ENCODE measurements at regions of chr10 and their contacts with region 1.

Region 1: GRCh38 chr10:28179006-28179742 is 123.7 kb downstream of the MPP7 start:
- DNase-seq: peak; percentile 72
- H3K4me3 Mint-ChIP-seq: peak overlapping the region; percentile 50
- H3K27ac Mint-ChIP-seq: peak overlapping the region; percentile 73
- H3K4me1 Mint-ChIP-seq: peaks cover 17% of the 10 kb centered on the region
- H3K27me3 Mint-ChIP-seq: no peaks in the 10 kb centered on the region
- CTCF ChIP-seq: peak; percentile 64

Region 2: DNA sequence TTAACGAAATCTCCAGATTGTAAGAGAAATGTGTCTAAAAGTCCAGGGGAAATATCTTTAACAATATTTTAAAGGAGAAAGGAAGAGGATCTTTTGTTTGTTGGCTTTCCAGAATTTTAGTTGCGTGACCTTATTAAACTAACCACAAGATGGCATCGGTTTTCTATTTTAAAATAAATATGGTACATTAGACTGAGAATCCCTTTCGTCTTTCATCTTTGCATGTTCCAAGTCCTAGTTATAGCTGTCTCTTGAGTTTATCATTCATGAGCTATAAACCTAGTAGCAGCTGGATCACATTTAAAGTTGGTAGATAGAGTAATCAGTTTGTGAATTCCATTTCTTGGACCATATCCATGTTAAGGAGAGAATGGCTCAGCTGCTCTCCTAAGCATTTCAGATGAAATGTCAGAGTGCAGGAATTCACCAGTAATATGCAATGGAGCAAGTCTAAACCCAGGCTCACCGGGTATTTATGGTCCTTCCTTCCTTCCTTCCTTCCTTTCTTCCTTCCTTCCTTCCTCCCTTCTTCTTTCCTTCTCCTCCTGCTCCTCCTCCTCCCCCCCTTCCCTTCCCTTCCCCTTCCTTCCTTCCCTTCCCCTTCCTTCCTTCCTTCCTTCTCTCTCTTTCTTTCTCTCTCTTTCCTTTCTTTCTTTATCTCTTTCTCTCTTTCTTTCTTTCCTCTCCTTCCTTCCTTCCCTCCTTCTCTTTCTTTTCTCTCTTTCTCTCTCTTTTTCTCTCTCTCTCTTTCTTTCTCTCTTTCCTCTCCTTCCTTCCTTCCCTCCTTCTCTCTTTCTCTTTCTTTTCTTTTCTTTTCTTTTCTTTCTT is 732.9 kb before region 1 on chr10:
- CTCF ChIA-PET with region 1: no interaction called
- POLR2A ChIA-PET with region 1: no interaction called
- intact Hi-C with region 1: loop called (anchors 1 kb)
- DNase-seq: peak; percentile 45
- H3K4me3 Mint-ChIP-seq: no peak overlapping the region
- H3K27ac Mint-ChIP-seq: peak overlapping the region; percentile 73
- H3K4me1 Mint-ChIP-seq: peaks cover 16% of the 10 kb centered on the region
- H3K27me3 Mint-ChIP-seq: no peaks in the 10 kb centered on the region
- CTCF ChIP-seq: peak; percentile 38

Region 3: GRCh38 chr10:27661514-27662286 is 517.5 kb before region 1 on chr10:
- CTCF ChIA-PET with region 1: no interaction called
- POLR2A ChIA-PET with region 1: no interaction called
- intact Hi-C with region 1: loop called (anchors 5 kb)
- DNase-seq: peak; percentile 16
- H3K4me3 Mint-ChIP-seq: no peak overlapping the region
- H3K27ac Mint-ChIP-seq: no peak overlapping the region
- H3K4me1 Mint-ChIP-seq: peaks cover 14% of the 10 kb centered on the region
- H3K27me3 Mint-ChIP-seq: no peaks in the 10 kb centered on the region
- CTCF ChIP-seq: no peak

Region 4: GRCh38 chr10:27759483-27760272 is 419.5 kb before region 1 on chr10:
- CTCF ChIA-PET with region 1: no interaction called
- POLR2A ChIA-PET with region 1: no interaction called
- intact Hi-C with region 1: loop called (anchors 1 kb)
- DNase-seq: peak; percentile 9
- H3K4me3 Mint-ChIP-seq: no peak overlapping the region
- H3K27ac Mint-ChIP-seq: no peak overlapping the region
- H3K4me1 Mint-ChIP-seq: no peaks in the 10 kb centered on the region
- H3K27me3 Mint-ChIP-seq: no peaks in the 10 kb centered on the region
- CTCF ChIP-seq: peak; percentile 18

Region 5: GRCh38 chr10:27865221-27865638 is 313.9 kb before region 1 on chr10:
- CTCF ChIA-PET with region 1: interaction called, 11 read pairs
- POLR2A ChIA-PET with region 1: no interaction called
- intact Hi-C with region 1: loop called (anchors 2 kb)
- DNase-seq: peak; percentile 44
- H3K4me3 Mint-ChIP-seq: no peak overlapping the region
- H3K27ac Mint-ChIP-seq: peak overlapping the region; percentile 40
- H3K4me1 Mint-ChIP-seq: peaks cover 15% of the 10 kb centered on the region
- H3K27me3 Mint-ChIP-seq: no peaks in the 10 kb centered on the region
- CTCF ChIP-seq: no peak

Region 6: DNA sequence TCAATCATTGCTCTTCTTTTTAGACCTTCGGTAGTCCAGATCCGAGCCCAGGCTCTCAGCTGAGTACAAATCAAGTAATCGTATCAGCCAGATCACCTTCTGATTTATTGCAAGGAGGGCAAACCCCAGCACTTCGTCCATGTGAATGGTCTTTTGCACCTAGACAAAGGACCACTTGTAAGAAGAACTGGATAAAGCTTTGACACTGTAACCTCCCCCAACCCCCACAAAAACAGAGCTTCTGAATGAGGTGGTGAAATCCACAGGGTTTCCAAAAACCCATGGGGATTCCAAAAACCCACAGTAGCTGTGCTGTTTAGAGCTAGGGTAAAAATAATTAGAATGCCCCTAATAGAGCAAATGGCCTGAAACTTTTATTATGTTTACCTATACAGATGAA is 31.5 kb before region 1 on chr10:
- CTCF ChIA-PET with region 1: no interaction called
- POLR2A ChIA-PET with region 1: no interaction called
- intact Hi-C with region 1: no loop called
- DNase-seq: no peak
- H3K4me3 Mint-ChIP-seq: no peak overlapping the region
- H3K27ac Mint-ChIP-seq: no peak overlapping the region
- H3K4me1 Mint-ChIP-seq: no peaks in the 10 kb centered on the region
- H3K27me3 Mint-ChIP-seq: no peaks in the 10 kb centered on the region
- CTCF ChIP-seq: no peak

Region 7: DNA sequence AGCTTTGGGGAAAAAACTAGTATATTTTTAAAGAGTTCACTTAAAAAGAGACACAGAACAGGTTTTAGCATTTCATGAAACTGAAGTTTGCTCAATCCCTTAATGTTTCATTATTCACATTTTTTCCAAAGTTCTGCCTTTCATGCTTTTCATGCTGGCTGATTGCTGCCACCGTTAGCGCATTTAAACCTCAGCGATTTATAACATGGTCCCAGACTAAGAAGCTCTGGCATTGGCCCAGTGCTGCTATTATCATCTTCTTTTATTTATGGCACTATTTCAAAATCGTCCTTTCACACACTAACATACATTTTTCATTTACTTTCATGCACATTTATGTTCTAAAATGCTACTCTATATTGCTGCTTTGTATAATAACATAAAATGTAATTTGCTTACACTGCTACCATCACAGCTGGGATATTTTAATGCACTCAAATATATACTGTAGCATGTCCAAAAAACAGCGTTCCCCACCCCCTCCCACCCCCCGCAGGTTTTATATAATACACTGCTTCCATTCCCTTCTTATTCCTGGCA is 18.2 kb before region 1 on chr10:
- CTCF ChIA-PET with region 1: no interaction called
- POLR2A ChIA-PET with region 1: no interaction called
- intact Hi-C with region 1: no loop called
- DNase-seq: no peak
- H3K4me3 Mint-ChIP-seq: no peak overlapping the region
- H3K27ac Mint-ChIP-seq: no peak overlapping the region
- H3K4me1 Mint-ChIP-seq: no peaks in the 10 kb centered on the region
- H3K27me3 Mint-ChIP-seq: no peaks in the 10 kb centered on the region
- CTCF ChIP-seq: no peak

Region 8: GRCh38 chr10:28302638-28303488 is 123.7 kb after region 1 on chr10 and contains the start of gene MPP7:
- CTCF ChIA-PET with region 1: no interaction called
- POLR2A ChIA-PET with region 1: no interaction called
- intact Hi-C with region 1: no loop called
- DNase-seq: peak; percentile 98
- H3K4me3 Mint-ChIP-seq: peak within 1 kb of the TSS; percentile 88
- H3K27ac Mint-ChIP-seq: no peak within 1 kb of the TSS
- H3K4me1 Mint-ChIP-seq: peaks cover 13% of the 10 kb centered on the region
- H3K27me3 Mint-ChIP-seq: peaks cover 25% of the 10 kb centered on the region
- CTCF ChIP-seq: peak; percentile 28
- total RNA-seq, gene MPP7: 4.1 and 5.4 TPM in 2 replicates